Activated T-helper 2 cell treated with anti-CD3 and anti-CD28 coated beads, Interferon-gamma antibody, Interleukin-2, Interleukin-4, amounts not matched to agents 10 μg/mL and 5 μg/mL and 100 μg/mL, durations not matched to agents 14 hours and 24 hours and 36 hours (primary cell): ENCODE measurements at regions of chr9 and their contacts with region 1.

Region 1: GRCh38 chr9:121686930-121687541 is 35.6 kb downstream of the DAB2IP start:
- DNase-seq: peak; percentile 50
- H3K4me3 Mint-ChIP-seq: no peak overlapping the region
- H3K27ac Mint-ChIP-seq: no peak overlapping the region
- H3K4me1 Mint-ChIP-seq: no peaks in the 10 kb centered on the region
- H3K27me3 Mint-ChIP-seq: peaks cover 6% of the 10 kb centered on the region

Region 2: DNA sequence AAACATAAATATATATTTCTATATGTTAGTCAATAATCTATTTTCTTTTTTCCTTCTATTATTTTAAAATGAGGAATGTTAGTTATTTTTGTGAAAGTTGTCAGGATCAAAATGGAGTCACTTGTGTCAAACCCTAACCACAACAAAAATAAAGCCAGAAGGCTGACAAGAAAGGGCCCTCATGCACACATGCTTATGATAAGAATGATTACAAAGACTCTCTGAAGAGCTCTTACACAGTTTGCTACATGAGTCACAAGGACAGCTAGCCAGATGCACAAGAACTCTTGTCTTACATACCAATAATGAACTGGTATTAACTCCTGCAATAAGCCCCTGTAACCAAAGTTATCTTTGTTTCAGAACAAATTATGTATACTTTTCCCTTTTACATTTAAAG is 252.1 kb before region 1 on chr9:
- intact Hi-C with region 1: no loop called
- DNase-seq: no peak
- H3K4me3 Mint-ChIP-seq: no peak overlapping the region
- H3K27ac Mint-ChIP-seq: no peak overlapping the region
- H3K4me1 Mint-ChIP-seq: no peaks in the 10 kb centered on the region
- H3K27me3 Mint-ChIP-seq: peaks cover 32% of the 10 kb centered on the region

Region 3: DNA sequence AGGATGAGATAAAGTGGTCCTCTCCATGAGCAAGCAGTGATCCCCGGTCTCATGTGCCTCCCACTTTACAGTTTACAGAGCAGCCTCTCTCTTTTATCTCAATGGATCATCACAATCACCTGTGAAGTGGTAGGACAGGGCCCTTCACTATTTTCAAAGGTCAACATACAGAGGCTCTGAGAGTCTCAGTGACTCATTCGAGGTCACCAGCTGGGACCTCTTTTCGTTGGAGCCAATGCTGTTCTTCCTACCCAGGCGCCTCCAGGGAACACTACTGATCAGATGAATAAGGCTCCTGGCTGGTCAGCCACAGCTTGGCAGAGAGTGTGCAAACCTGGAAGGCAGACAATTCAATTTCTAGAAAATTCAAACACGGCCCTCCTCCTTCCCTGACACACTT is 204.0 kb before region 1 on chr9:
- intact Hi-C with region 1: no loop called
- DNase-seq: no peak
- H3K4me3 Mint-ChIP-seq: no peak overlapping the region
- H3K27ac Mint-ChIP-seq: no peak overlapping the region
- H3K4me1 Mint-ChIP-seq: peaks cover 2% of the 10 kb centered on the region
- H3K27me3 Mint-ChIP-seq: peaks cover 5% of the 10 kb centered on the region

Region 4: DNA sequence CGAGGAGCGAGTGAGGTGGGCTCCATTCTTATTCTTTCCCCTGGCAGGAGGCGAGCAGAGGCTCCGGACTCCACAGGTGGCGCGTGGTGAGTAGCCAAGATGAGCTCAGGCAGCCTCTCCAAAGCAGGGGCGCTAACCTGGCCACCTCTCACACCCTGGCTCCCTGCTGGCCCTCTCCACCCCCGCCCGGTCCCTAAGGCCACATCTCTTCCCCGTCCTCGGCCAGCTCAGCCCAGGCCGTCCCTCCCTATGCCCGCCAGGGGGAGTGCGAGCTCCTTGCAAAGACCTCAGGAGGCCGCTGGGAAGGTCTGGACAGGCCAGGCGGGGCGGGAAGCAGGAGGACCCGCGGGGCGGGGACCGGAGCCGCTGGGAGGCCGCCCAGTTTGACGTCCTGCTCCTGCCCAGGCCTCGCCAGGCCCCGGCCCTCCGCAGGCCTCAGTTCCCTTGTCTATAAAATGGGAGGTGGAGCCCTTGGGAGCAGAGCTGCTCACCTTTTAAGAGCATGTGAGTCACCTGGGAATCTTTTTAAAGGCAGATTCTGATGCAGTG is 141.1 kb before region 1 on chr9:
- intact Hi-C with region 1: loop called (anchors 5 kb)
- DNase-seq: peak; percentile 57
- H3K4me3 Mint-ChIP-seq: no peak overlapping the region
- H3K27ac Mint-ChIP-seq: no peak overlapping the region
- H3K4me1 Mint-ChIP-seq: no peaks in the 10 kb centered on the region
- H3K27me3 Mint-ChIP-seq: peaks cover 4% of the 10 kb centered on the region